ENCODE measurements at regions of chr17 and their contacts with region 1.

Region 1: DNA sequence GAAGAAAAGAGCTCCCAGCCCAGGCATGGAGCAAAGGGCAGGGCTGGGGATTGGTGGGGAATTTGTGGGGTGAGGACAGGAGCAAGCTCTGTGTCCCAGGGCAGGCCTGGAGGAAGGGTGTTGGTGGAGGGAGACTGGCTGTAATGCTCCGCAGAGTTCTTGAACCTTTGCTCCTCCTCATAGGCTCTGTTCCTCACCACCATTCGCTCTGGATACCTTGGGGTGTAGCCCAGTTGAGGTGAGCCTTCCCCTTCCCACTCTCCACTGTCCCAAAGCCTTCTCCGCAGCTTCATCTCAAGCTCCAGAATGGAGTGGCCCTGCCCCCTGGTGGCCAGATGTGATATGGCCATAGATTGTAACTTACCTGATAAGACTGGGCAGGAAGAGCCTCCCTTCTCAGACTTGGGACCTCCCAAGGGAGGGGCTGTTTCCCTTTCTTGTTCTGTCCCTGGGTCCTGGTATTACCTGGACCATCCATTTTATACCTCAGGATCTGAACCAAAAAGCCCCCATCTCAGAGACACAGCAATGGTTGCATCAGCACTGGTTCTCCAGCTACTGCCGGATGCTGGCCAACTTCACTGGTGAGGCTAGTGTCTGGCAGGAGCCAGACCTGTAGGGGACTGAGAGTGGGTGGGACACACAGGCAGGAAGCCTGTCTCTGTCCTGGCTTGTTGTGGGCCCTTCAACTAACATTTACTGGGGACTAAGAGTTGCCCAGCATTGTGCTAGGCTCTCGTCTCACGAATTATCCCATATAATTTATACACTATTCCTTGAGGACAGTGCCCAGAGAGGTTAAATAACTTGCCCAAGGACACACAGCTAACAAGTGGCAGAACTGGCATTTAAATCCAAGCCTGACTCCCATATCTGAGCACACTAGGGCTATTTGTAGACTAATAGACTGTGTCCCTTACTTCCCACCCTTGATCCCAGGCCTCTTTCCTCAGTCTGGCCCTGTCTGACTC is 19.1 kb upstream of the STAC2 start:
- DNase-seq: peak; percentile 73
- H3K4me3 Mint-ChIP-seq: no peak overlapping the region
- H3K27ac Mint-ChIP-seq: no peak overlapping the region
- H3K4me1 Mint-ChIP-seq: peaks cover under 1% of the 10 kb centered on the region
- H3K27me3 Mint-ChIP-seq: peaks cover 6% of the 10 kb centered on the region

Region 2: GRCh38 chr17:38925263-38925995 is 319.5 kb before region 1 on chr17 and contains the start of gene LASP1NB:
- intact Hi-C with region 1: no loop called
- DNase-seq: no peak
- H3K4me3 Mint-ChIP-seq: peak within 1 kb of the TSS; percentile 24
- H3K27ac Mint-ChIP-seq: peak within 1 kb of the TSS; percentile 21
- H3K4me1 Mint-ChIP-seq: peaks cover 24% of the 10 kb centered on the region
- H3K27me3 Mint-ChIP-seq: no peaks in the 10 kb centered on the region

Region 3: GRCh38 chr17:39014044-39014794 is 230.7 kb before region 1 on chr17:
- intact Hi-C with region 1: no loop called
- DNase-seq: no peak
- H3K4me3 Mint-ChIP-seq: no peak overlapping the region
- H3K27ac Mint-ChIP-seq: no peak overlapping the region
- H3K4me1 Mint-ChIP-seq: peaks cover 27% of the 10 kb centered on the region
- H3K27me3 Mint-ChIP-seq: no peaks in the 10 kb centered on the region

Region 4: DNA sequence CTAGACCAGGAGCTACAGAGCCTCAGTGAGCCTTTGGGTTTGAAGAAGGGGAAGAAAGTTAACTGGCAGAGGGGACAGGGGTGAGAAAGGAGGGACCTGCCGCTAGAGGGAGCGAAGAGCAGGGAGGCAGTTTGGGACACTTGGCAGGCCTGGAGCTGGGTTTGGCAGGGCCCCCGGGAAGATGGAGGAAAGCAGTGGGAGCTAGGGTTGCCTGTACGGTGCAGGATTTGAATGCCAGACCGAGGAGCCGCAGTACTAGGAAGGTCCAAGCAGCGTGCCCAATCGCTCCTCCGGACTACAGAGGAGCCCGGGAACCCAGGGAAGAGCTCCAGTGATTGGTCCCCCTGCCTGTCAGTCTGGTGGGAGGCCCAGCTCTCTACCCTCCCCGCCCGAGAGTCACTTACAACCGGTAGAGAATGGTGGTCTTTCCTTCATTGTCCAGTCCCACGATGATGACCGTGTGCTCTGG is 80.2 kb before region 1 on chr17:
- intact Hi-C with region 1: loop called (anchors 1 kb)
- DNase-seq: peak; percentile 62
- H3K4me3 Mint-ChIP-seq: peak overlapping the region; percentile 80
- H3K27ac Mint-ChIP-seq: peak overlapping the region; percentile 2
- H3K4me1 Mint-ChIP-seq: peaks cover 29% of the 10 kb centered on the region
- H3K27me3 Mint-ChIP-seq: peaks cover 28% of the 10 kb centered on the region

Region 5: GRCh38 chr17:39209317-39210092 is 35.4 kb before region 1 on chr17:
- intact Hi-C with region 1: loop called (anchors 1 kb)
- DNase-seq: peak; percentile 47
- H3K4me3 Mint-ChIP-seq: peak overlapping the region; percentile 15
- H3K27ac Mint-ChIP-seq: no peak overlapping the region
- H3K4me1 Mint-ChIP-seq: peaks cover 16% of the 10 kb centered on the region
- H3K27me3 Mint-ChIP-seq: peaks cover 12% of the 10 kb centered on the region

Region 6: GRCh38 chr17:39598047-39598481 is 353.2 kb after region 1 on chr17:
- intact Hi-C with region 1: no loop called
- DNase-seq: no peak
- H3K4me3 Mint-ChIP-seq: no peak overlapping the region
- H3K27ac Mint-ChIP-seq: no peak overlapping the region
- H3K4me1 Mint-ChIP-seq: peaks cover 5% of the 10 kb centered on the region
- H3K27me3 Mint-ChIP-seq: peaks cover 83% of the 10 kb centered on the region